ENCODE measurements at regions of chr14 and their contacts with region 1.

Region 1: DNA sequence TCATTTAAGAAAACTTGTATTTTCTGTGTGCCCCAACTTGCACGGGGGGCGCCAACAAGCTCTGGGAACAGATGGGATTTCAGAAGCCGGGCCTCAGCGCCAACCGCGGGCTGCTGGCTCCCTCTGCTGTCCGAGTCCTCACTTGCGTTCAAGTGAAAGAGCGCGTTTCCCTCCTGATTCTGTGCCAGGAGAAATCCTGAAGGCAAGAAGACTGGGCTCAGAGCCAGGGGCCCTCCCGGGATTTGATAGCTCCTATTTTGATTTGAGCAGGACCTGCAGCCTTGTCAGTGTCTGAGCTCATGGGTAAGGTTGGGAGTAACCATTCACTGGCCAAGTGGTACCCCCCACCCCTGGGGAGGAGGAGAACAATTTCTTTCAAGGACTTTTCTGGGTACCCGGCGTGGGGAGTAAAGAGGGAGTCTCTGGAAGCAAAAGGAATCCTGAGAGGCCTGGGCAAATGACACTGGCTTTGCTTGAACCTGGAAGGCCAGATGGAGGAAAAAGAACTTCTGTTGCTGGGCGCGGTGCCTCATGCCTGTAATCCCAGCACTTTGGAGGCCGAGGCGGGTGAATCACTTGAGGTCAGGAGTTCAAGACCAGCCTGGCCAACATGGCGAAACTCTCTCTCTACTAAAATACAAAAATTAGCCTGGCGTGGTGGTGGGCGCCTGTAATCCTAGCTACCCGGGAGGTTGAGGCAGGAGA is 179.0 kb upstream of the RGS6 start:
- DNase-seq: peak; percentile 81
- H3K4me3 Mint-ChIP-seq: no peak overlapping the region
- H3K27ac Mint-ChIP-seq: no peak overlapping the region
- H3K4me1 Mint-ChIP-seq: no peaks in the 10 kb centered on the region
- H3K27me3 Mint-ChIP-seq: no peaks in the 10 kb centered on the region

Region 2: GRCh38 chr14:71011479-71011878 is 741.8 kb before region 1 on chr14:
- CTCF ChIA-PET with region 1: no interaction called
- intact Hi-C with region 1: no loop called
- DNase-seq: no peak
- H3K4me3 Mint-ChIP-seq: no peak overlapping the region
- H3K27ac Mint-ChIP-seq: no peak overlapping the region
- H3K4me1 Mint-ChIP-seq: peaks cover 31% of the 10 kb centered on the region
- H3K27me3 Mint-ChIP-seq: no peaks in the 10 kb centered on the region

Region 3: DNA sequence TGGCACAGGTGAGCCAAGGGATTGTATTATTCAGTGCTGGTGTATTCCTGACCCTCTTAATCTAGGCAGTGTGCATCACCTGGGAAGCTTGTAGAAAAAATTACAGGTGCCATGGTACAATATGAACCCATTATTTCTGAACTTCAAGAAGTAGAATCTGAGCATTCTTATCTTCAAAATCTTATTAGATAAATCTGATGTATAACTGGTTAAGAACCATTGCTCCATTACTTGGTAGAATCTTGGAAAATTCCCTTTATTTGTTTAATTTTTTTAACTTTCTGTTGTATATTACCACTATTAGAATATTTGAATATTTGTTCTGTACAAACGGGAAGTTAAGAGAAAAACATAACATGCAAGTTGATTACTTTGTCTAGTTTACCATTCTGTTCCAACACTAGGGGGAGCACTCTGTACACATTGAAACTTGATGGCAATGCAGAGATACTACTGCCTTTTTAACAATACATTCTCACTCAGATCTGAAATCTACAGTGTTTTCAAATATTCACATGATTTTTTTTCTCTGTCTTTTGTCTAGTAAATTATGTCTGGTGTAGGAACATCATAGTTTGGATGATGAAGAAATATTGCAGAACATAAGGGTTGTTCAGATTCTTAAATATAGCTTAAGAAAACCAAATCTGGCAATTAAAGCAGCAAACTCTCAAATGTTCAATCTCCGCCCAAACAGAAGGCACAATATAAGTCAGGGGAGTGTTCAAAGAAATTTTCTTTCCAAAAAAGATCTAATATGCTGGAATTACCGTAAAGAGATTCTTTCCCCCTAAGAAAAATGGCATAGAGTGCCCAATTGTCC is 649.4 kb before region 1 on chr14:
- CTCF ChIA-PET with region 1: interaction called, 18 read pairs
- intact Hi-C with region 1: no loop called
- DNase-seq: no peak
- H3K4me3 Mint-ChIP-seq: no peak overlapping the region
- H3K27ac Mint-ChIP-seq: no peak overlapping the region
- H3K4me1 Mint-ChIP-seq: peaks cover 3% of the 10 kb centered on the region
- H3K27me3 Mint-ChIP-seq: no peaks in the 10 kb centered on the region

Region 4: GRCh38 chr14:71121711-71122110 is 631.6 kb before region 1 on chr14:
- CTCF ChIA-PET with region 1: no interaction called
- intact Hi-C with region 1: no loop called
- DNase-seq: no peak
- H3K4me3 Mint-ChIP-seq: no peak overlapping the region
- H3K27ac Mint-ChIP-seq: no peak overlapping the region
- H3K4me1 Mint-ChIP-seq: peaks cover 17% of the 10 kb centered on the region
- H3K27me3 Mint-ChIP-seq: no peaks in the 10 kb centered on the region

Region 5: DNA sequence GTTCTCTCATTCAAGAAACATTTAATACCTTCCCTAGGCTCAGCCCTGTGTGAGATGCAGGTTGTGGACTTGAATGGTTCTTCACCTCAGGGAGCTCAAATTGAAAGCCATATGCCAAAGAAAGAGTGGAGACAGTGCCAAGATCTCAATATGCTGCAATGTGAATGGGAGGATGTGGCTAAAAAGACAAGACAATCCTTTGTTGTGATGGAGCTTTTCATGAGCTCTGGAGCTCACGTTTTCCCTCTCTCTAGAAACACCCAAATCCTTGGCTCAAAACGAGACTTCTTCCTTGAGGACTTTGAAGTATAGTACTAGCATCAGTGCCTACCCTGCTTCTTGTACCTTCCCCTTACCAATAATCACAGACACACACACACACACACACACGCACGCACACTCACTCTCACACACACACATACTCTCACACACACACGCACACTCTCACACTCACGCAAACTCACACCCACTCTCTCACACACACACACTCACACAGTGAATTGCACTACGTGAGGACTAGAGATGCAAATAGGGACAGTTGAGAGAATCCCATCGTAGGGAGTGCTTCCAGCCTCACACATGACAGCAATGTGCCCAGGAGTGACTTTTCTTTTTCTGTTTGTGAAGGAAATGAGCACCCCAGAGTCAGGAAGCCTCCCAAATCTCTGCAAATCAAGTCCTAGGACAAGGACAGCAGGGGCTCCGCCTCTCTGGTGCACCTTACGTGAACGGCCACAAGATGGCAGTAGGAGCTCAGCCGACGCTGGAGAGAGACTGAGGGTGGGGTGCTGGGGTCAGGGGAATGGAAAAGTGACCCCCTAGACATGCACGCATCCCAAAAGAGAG is 614.6 kb before region 1 on chr14:
- CTCF ChIA-PET with region 1: interaction called, 71 read pairs
- intact Hi-C with region 1: loop called (anchors 1 kb)
- DNase-seq: peak; percentile 67
- H3K4me3 Mint-ChIP-seq: no peak overlapping the region
- H3K27ac Mint-ChIP-seq: no peak overlapping the region
- H3K4me1 Mint-ChIP-seq: peaks cover 17% of the 10 kb centered on the region
- H3K27me3 Mint-ChIP-seq: no peaks in the 10 kb centered on the region

Region 6: GRCh38 chr14:71168564-71169427 is 584.5 kb before region 1 on chr14:
- CTCF ChIA-PET with region 1: interaction called, 11 read pairs
- intact Hi-C with region 1: no loop called
- DNase-seq: no peak
- H3K4me3 Mint-ChIP-seq: peak overlapping the region; percentile 45
- H3K27ac Mint-ChIP-seq: no peak overlapping the region
- H3K4me1 Mint-ChIP-seq: peaks cover 16% of the 10 kb centered on the region
- H3K27me3 Mint-ChIP-seq: peaks cover 16% of the 10 kb centered on the region

Region 7: DNA sequence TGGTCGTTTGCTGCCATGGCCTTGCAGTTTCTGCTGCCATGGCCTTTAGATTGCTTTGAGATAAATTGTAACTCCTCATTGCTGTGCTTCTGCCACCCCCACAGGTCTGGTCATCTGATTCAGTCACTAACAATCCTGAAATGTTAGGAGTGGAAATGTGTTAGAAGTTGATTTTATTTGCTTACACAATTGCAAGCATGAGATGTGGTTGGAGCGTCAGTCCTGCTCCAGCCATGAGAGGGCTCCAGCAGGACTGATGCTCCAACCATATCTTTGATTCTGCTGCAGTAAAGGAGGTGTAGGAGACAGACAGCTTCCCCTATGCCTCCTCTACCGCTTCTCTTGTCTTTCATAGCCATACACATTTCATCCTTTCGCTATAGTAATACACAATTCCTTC is 47.8 kb before region 1 on chr14:
- CTCF ChIA-PET with region 1: no interaction called
- intact Hi-C with region 1: no loop called
- DNase-seq: no peak
- H3K4me3 Mint-ChIP-seq: no peak overlapping the region
- H3K27ac Mint-ChIP-seq: no peak overlapping the region
- H3K4me1 Mint-ChIP-seq: no peaks in the 10 kb centered on the region
- H3K27me3 Mint-ChIP-seq: no peaks in the 10 kb centered on the region

Region 8: GRCh38 chr14:71855399-71856036 is 102.2 kb after region 1 on chr14:
- CTCF ChIA-PET with region 1: interaction called, 3 read pairs
- intact Hi-C with region 1: loop called (anchors 10 kb)
- DNase-seq: peak; percentile 76
- H3K4me3 Mint-ChIP-seq: no peak overlapping the region
- H3K27ac Mint-ChIP-seq: no peak overlapping the region
- H3K4me1 Mint-ChIP-seq: peaks cover 4% of the 10 kb centered on the region
- H3K27me3 Mint-ChIP-seq: peaks cover 48% of the 10 kb centered on the region

Measured in activated naive CD4-positive, alpha-beta T cell treated with anti-CD3 and anti-CD28 coated beads for 36 hours (primary cell).